Mucosa of descending colon (tissue), 3 donors: ENCODE measurements at regions of chr20 and their contacts with region 1.

Region 1: GRCh38 chr20:11204926-11205768 is 531.3 kb upstream of the JAG1 start:
- DNase-seq: peak in 2 of 3 donors; percentile 47 to 88
- ATAC-seq: peak; percentile 94
- H3K4me3 ChIP-seq: no peak overlapping the region
- H3K4me1 ChIP-seq: no peaks in the 10 kb centered on the region
- CTCF ChIP-seq: peak; percentile 53

Region 2: GRCh38 chr20:10553326-10553984 is 651.7 kb before region 1 on chr20:
- intact Hi-C with region 1: loop called in 1 of 2 experiments (anchors 10 kb)
- DNase-seq: peak in 2 of 3 donors; percentile 69 to 86
- ATAC-seq: peak; percentile 82
- H3K4me3 ChIP-seq: no peak overlapping the region
- H3K4me1 ChIP-seq: peaks cover 5% of the 10 kb centered on the region
- CTCF ChIP-seq: peak; percentile 70